Spleen (tissue), 13 donors: ENCODE measurements at regions of chr20 and their contacts with region 1.

Region 1: GRCh38 chr20:35303735-35304491 is 11.7 kb upstream of the FAM83C start:
- DNase-seq: peak; percentile 89
- H3K4me3 ChIP-seq: no peak overlapping the region
- H3K27ac ChIP-seq: no peak overlapping the region
- H3K4me1 ChIP-seq: peaks cover 0 to 13% (median 7%) of the 10 kb centered on the region in 6 donors
- H3K27me3 ChIP-seq: no peaks in the 10 kb centered on the region
- CTCF ChIP-seq: peak; percentile 77 to 96 (median 90)
- POLR2A ChIP-seq: no peak

Region 2: DNA sequence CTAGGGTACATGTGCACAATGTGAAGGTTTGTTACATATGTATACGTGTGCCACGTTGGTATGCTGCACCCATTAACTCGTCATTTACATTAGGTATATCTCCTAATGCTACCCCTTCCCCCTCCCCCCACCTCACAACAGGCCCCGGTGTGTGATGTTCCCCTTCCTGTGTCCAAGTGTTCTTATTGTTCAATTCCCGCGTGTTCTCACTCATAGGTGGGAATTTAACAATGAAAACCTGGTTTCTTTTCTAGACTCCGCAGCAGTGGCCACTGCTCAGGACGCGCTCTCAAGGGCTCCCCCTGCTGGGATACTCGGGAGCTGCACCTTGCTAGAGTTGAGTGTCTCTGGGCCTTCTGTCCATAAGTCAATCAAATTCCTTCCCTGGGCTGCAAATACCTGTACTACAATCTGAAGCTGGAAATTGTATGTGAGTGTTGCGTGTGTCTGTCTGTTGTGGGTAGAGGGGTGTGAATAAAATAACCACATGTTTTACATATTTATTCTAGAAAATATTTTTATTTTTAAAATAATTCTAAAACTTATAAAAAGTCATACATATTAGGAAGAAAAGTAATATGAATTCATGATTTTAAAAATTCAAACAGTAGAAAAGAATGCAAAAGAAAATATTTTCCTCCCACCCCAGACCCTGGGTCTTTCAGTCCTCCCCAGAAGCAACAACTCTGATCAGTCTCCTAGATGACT is 143.3 kb after region 1 on chr20:
- intact Hi-C with region 1: loop called (anchors 5 kb)
- DNase-seq: peak; percentile 94
- H3K4me3 ChIP-seq: peak overlapping the region in 5 of 8 donors; percentile 17 to 65 (median 28)
- H3K27ac ChIP-seq: no peak overlapping the region
- H3K4me1 ChIP-seq: peaks cover 0 to 10% (median 4%) of the 10 kb centered on the region in 6 donors
- H3K27me3 ChIP-seq: peaks cover 0 to 14% (median 0%) of the 10 kb centered on the region in 7 donors
- CTCF ChIP-seq: peak; percentile 75 to 96 (median 91)
- POLR2A ChIP-seq: no peak

Region 3: GRCh38 chr20:35463455-35464300 is 159.8 kb after region 1 on chr20:
- intact Hi-C with region 1: no loop called
- DNase-seq: no peak
- H3K4me3 ChIP-seq: no peak overlapping the region
- H3K27ac ChIP-seq: no peak overlapping the region
- H3K4me1 ChIP-seq: peaks cover 0 to 23% (median 3%) of the 10 kb centered on the region in 6 donors
- H3K27me3 ChIP-seq: no peaks in the 10 kb centered on the region
- CTCF ChIP-seq: peak; percentile 75 to 90 (median 82)
- POLR2A ChIP-seq: no peak

Region 4: GRCh38 chr20:36070451-36070850 is 766.5 kb after region 1 on chr20:
- intact Hi-C with region 1: no loop called
- DNase-seq: no peak
- H3K4me3 ChIP-seq: no peak overlapping the region
- H3K27ac ChIP-seq: no peak overlapping the region
- H3K4me1 ChIP-seq: peaks cover under 1 to 12% (median 5%) of the 10 kb centered on the region in 6 donors
- H3K27me3 ChIP-seq: peaks cover 0 to 7% (median 0%) of the 10 kb centered on the region in 7 donors
- CTCF ChIP-seq: no peak
- POLR2A ChIP-seq: no peak